ENCODE measurements at regions of chr2 and their contacts with region 1.

Region 1: GRCh38 chr2:68141875-68142274 is 15.8 kb upstream of the PNO1 start:
- DNase-seq: no peak
- H3K4me3 ChIP-seq: no peak overlapping the region
- H3K27ac ChIP-seq: no peak overlapping the region
- H3K4me1 ChIP-seq: no peaks in the 10 kb centered on the region
- H3K27me3 ChIP-seq: no peaks in the 10 kb centered on the region
- CTCF ChIP-seq: no peak

Region 2: DNA sequence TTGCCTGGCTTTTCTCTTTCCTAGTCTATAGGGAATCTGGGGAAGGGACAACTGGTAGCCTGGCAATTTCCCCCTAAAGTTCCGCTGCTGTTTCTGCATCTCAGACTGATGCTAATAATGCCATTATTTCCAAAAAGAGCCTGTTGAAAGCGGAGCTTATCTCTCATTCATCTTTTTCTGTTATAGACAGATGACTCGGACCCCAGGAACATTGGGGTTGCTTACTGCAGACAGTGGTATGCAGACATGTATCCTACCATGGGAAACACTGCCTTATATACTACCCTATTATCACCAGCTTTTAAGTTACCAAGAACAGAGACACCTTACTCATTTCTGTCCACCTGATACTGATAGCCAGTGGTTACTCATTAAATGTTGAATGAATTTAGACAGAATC is 729.5 kb before region 1 on chr2:
- intact Hi-C with region 1: no loop called
- DNase-seq: no peak
- H3K4me3 ChIP-seq: no peak overlapping the region
- H3K27ac ChIP-seq: no peak overlapping the region
- H3K4me1 ChIP-seq: peaks cover 0 to 10% (median 0%) of the 10 kb centered on the region in 4 donors
- H3K27me3 ChIP-seq: no peaks in the 10 kb centered on the region
- CTCF ChIP-seq: no peak

Region 3: GRCh38 chr2:68074050-68074449 is 67.8 kb before region 1 on chr2:
- intact Hi-C with region 1: loop called (anchors 2 kb)
- DNase-seq: no peak
- H3K4me3 ChIP-seq: no peak overlapping the region
- H3K27ac ChIP-seq: no peak overlapping the region
- H3K4me1 ChIP-seq: no peaks in the 10 kb centered on the region
- H3K27me3 ChIP-seq: no peaks in the 10 kb centered on the region
- CTCF ChIP-seq: no peak

Measured in tibial artery (tissue), 4 donors.